PC-3 (cell line): ENCODE measurements at regions of chr3 and their contacts with region 1.

Region 1: GRCh38 chr3:190345027-190345821 is 23.0 kb upstream of the CLDN1 start:
- DNase-seq: peak; percentile 95
- ATAC-seq: peak; percentile 90
- H3K4me3 ChIP-seq: peak overlapping the region; percentile 65
- H3K27ac ChIP-seq: peak overlapping the region; percentile 94
- H3K4me1 ChIP-seq: peaks cover 28% of the 10 kb centered on the region
- H3K27me3 ChIP-seq: no peaks in the 10 kb centered on the region
- CTCF ChIP-seq: no peak

Region 2: GRCh38 chr3:190252080-190252479 is 93.1 kb before region 1 on chr3:
- CTCF ChIA-PET with region 1: no interaction called
- POLR2A ChIA-PET with region 1: no interaction called
- intact Hi-C with region 1: no loop called
- DNase-seq: no peak
- ATAC-seq: no peak
- H3K4me3 ChIP-seq: no peak overlapping the region
- H3K27ac ChIP-seq: no peak overlapping the region
- H3K4me1 ChIP-seq: no peaks in the 10 kb centered on the region
- H3K27me3 ChIP-seq: no peaks in the 10 kb centered on the region
- CTCF ChIP-seq: no peak

Region 3: GRCh38 chr3:190306513-190307165 is 38.6 kb before region 1 on chr3:
- CTCF ChIA-PET with region 1: no interaction called
- POLR2A ChIA-PET with region 1: interaction called, 4 read pairs
- intact Hi-C with region 1: loop called (anchors 1 kb)
- DNase-seq: peak; percentile 66
- ATAC-seq: peak; percentile 62
- H3K4me3 ChIP-seq: 0 out of 2 replicates have a peak overlapping the region, but pooled peaks have one; percentile 5
- H3K27ac ChIP-seq: peak overlapping the region; percentile 80
- H3K4me1 ChIP-seq: peaks cover 60% of the 10 kb centered on the region
- H3K27me3 ChIP-seq: no peaks in the 10 kb centered on the region
- CTCF ChIP-seq: no peak

Region 4: DNA sequence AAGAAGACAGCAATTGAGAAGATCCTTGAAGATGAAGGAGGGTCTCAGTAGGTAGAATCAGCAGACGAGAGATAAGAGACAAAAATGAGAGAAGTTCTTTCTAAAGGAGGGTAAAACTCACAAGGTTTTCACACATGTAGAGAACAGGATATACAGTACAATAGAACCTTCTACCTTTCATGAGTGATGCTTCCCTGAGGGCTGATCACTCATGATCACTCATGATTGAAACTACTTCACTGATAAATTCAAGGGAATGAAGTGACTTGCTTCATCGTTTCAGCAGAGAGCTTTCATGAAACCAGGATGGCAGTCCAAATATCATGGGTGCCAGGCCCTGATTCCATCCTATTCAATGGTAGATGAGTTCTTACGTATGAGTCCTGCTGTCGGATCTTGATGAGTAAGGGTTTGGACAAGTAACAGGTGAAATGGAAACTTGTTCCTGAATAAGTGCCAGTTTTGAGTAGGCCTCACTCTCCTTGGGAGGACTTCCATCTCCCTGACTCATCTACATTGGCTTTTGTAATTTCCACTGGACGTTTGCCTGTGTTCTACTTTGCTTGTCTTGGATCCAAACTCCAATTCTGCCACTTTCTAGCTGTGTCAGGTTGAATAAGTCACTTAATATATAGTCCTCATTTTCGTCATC is 33.1 kb after region 1 on chr3:
- CTCF ChIA-PET with region 1: no interaction called
- POLR2A ChIA-PET with region 1: interaction called, 3 read pairs
- intact Hi-C with region 1: loop called (anchors 1 kb)
- DNase-seq: peak; percentile 93
- ATAC-seq: peak; percentile 53
- H3K4me3 ChIP-seq: no peak overlapping the region
- H3K27ac ChIP-seq: peak overlapping the region; percentile 60
- H3K4me1 ChIP-seq: peaks cover 61% of the 10 kb centered on the region
- H3K27me3 ChIP-seq: no peaks in the 10 kb centered on the region
- CTCF ChIP-seq: no peak